Posterior cingulate gyrus (tissue), 11 donors: ENCODE measurements at regions of chr5 and their contacts with region 1.

Region 1: DNA sequence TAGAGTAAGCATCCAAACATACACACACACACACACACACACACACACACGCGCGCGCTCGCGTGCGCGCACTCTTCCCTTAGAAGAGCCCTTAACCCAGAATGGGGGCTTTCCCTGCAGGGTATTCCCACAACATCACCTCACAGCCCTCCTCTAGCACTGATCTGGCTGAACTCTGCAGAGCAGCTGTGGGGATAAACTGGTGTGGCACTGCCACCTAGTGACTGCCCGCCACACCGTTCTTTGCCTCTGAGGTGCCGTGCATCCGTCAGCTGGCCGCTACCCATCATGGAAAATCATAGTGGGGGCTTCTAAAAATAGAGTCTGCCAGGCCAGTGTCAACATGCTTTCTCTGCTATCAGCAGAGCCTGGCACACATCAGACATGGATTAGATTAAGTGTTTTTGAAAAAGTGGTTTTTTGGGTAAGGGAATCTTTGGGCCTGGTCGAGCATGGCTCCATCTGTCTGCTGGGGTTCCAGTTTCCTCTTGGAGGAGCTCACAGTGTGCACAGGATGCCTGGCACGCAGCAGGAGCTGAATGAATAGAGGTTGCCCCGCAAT is 88.1 kb downstream of the KCNN2 start:
- DNase-seq: peak; percentile 71 to 96 (median 82)

Region 2: GRCh38 chr5:113612060-113612496 is 837.9 kb before region 1 on chr5:
- intact Hi-C with region 1: loop called (anchors 5 kb)
- DNase-seq: no peak

Region 3: DNA sequence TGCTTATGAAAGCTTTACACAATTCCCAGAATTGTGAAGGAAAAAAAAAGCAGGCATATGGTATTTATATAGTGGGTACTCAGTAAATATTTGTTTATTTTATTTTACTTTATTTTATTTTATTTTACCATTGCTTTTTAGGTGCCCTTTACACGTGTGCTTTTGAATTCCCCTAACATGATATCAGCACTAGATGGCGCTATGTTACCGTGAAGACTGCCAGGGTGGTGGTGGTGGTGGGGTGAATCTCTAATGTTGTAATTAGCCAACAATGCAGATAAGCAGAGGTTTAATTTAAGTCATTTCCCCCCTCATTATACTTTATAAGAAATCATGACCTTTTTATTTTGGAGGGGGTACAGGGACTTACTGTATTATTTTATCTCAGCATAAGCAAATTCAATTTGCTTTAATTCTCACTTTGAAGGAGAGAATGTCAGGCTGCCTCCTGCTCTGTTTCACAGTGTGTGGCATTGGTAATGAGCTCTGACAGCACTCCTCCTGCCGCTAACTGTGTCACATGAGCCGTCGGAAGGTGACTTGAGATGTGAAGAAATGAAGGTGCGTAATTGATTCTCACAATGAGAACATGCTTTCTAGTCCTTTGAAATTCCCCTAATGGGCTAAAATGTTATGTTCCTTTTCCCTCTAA is 770.9 kb before region 1 on chr5:
- intact Hi-C with region 1: loop called (anchors 1 kb)
- DNase-seq: peak in 6 of 10 donors; percentile 17 to 81 (median 30)

Region 4: GRCh38 chr5:114018186-114018585 is 431.8 kb before region 1 on chr5:
- intact Hi-C with region 1: loop called (anchors 1 kb)
- DNase-seq: peak in 1 of 10 donors; percentile 3

Region 5: DNA sequence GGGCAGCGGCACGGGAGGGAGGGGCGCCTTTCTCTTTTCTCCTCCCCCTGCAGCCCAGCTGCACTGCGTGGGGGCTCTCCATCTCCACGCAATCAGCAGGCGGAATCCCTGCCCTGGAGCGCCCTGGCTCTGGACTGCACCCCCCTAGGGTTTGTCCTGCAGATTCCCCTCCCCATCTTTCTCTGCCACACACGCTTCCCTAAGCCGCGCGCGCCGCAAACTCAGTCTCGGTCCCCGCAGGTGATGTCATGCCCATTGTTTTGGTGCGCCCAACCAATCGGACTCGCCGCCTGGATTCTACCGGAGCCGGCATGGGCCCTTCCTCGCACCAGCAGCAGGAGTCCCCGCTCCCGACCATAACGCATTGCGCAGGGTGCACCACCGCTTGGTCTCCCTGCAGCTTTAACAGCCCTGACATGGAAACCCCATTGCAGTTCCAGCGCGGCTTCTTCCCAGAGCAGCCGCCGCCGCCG is 88.2 kb before region 1 on chr5 and contains the start of gene KCNN2:
- intact Hi-C with region 1: loop called (anchors 2 kb)
- DNase-seq: peak; percentile 78 to 99 (median 91)

Region 6: GRCh38 chr5:114391321-114391720 is 58.6 kb before region 1 on chr5:
- intact Hi-C with region 1: no loop called
- DNase-seq: no peak